ENCODE measurements at regions of chr1 and their contacts with region 1.

Region 1: DNA sequence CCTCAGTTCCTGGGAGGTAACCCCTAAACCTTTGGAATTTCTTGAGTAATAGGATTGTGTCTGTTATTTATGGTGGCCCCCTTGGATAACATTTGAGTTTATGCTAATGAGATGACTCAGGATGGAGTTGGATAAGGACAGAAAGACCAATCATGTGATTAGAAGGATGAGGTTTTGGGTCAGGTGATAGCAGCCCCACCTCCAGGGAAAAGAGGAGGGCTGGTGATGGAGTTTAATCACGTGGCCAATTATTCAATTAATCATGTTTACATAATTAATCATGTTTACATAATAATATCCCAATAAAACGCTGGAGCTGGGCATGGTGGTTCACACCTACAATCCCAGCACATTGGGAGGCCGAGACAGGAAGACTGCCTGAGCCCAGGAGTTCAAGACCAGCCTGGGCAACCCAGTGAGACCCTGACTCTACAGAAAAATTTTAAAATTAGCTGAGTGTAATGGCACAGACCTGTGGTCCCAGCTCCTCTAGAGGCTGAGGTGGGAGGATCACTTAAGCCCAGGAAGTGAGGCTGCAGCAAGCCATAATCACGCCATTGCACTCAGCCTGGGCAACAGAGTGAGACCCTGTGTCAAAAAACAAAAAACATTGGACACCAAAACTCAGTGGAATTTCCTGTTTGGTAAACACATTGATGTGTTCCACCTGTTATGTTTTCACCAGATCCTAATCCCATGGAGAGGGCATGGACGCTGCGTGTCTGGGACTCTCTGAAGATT is 73.3 kb downstream of the NUP210L start:
- DNase-seq: no peak

Region 2: DNA sequence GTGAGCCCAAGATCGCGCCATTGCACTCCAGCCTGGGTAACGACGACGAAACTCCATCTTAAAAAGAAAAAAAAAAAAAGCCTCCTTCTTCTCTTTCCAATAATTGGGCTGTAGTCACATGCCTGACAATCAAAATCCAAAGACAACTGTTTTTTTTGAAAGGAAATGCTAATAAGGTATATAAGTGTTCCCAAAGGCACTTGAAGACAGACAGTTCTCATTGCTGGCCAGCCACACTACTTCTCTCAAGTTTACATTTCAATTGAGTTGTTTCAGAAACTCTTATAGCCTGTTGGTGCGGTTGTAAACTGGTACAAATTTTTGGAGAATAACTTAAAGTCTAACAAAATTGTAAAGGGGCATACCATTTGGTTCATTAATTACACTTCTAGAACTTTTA is 182.0 kb before region 1 on chr1:
- CTCF ChIA-PET with region 1: interaction called, 11 read pairs
- POLR2A ChIA-PET with region 1: no interaction called
- DNase-seq: no peak